Dendritic cell treated with granulocyte-macrophage colony-stimulating factor and Interleukin-4, amounts not matched to agents 40 ng/mL and 50 ng/mL, for 4 days (primary cell): ENCODE measurements at regions of chr22 and their contacts with region 1.

Region 1: DNA sequence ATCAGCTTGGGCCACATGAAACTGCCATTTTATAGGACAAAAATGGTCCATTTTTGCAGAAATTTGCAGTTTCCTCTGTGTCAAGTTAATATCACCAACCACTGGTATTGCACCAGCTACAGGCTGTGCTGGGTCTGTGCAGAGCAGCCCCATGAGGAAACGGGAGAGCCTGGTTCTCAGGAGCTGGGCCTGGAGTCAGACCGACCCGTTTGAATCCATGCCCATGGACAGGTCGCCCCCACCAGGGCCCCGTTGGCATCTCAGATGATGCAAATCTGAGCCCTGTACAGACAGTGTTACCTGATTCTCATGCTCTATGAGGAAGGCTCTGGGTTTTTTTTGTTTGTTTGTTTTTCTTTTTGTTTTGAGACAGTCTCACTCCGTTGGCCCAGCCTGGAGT is 9.8 kb upstream of the SEC14L6 start:
- H3K4me3 Mint-ChIP-seq: no peak overlapping the region
- H3K27ac Mint-ChIP-seq: no peak overlapping the region
- H3K4me1 Mint-ChIP-seq: no peaks in the 10 kb centered on the region
- H3K27me3 Mint-ChIP-seq: no peaks in the 10 kb centered on the region

Region 2: DNA sequence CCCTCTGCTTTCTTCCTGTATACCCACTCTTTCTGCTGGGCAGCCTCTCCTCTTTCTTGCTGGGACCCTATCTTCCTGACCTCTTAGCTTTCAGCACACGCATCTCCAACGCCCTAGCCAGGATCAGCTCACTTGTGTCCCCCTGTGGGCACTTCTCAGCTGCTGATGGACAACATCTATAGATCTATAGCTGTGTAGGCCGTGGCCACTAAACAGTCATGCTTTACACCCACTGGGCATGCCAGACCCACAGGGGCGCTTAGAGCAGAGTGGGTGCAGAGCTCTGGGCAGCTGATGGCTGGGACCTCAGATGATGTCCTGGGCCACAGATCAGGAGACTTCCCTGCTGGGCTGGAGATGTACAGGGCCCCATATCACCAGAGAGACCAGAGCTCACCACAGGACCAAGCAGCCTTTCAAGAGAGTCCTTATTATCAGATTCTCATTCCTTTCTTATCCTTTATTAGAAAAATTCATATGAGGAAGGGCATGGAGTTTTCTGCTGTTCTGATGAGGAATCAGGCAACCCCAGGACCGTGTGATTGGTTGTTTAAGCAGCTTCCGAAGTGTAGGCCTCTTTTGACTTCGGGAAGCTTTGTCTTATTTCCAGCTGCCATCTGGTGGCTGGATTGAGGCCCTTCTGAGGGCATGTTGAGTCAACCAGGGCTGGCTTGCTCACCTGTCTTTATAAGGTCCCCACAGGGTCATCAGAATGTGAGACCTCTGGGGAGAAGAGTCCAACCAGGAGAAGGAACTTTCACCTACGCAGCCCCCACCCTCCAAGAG is 198.8 kb after region 1 on chr22:
- intact Hi-C with region 1: loop called (anchors 5 kb)
- H3K4me3 Mint-ChIP-seq: no peak overlapping the region
- H3K27ac Mint-ChIP-seq: no peak overlapping the region
- H3K4me1 Mint-ChIP-seq: no peaks in the 10 kb centered on the region
- H3K27me3 Mint-ChIP-seq: peaks cover 3% of the 10 kb centered on the region

Region 3: DNA sequence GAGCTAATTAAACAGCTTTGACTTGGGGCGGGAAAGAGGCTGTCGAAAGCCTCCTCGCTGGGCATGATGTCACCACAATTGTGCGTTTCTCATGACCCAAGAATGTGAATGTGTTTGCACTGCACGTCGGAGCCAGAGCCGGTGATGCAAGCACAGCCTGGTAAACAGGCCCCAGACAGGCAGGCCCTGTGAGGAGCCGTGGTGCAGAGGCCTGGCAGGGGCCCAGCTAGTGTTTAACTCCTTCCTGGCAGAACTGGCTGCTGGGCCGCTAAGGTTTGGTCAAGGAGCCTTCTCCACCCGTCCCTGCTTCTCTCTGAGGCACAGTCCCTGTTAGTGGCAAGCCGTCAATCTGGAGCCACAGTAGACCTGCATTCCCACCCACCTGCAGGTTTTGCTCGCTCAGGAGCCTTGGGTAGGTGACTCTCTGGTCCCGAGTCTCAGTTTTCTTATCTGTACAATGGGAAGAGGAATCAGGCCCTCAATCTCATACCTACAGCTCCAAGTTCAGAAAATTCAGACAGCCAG is 499.3 kb after region 1 on chr22:
- intact Hi-C with region 1: no loop called
- H3K4me3 Mint-ChIP-seq: no peak overlapping the region
- H3K27ac Mint-ChIP-seq: no peak overlapping the region
- H3K4me1 Mint-ChIP-seq: peaks cover 6% of the 10 kb centered on the region
- H3K27me3 Mint-ChIP-seq: no peaks in the 10 kb centered on the region